Activated naive CD4-positive, alpha-beta T cell treated with anti-CD3 and anti-CD28 coated beads for 36 hours (primary cell): ENCODE measurements at regions of chr1 and their contacts with region 1.

Region 1: DNA sequence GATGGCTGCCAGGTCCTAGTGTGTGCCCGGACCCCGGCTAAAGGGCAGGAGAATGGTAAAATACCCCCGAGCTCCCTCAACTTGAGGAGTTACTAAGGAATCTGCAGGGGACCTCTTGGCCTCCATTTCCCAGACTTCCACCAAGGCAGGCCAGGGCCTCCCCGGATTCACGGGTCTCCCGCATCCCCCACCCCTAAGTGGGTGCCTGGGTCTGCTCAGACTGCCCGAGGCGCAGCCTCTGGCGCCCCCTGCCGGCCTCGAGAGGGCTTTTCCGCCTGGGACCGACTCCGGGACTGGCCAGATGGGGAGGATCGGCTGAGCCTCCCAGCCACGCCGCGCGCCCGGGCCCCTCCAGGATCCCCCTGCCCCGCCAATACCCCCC is 1.7 kb downstream of the PLEKHG5 start:
- DNase-seq: peak; percentile 87
- H3K4me3 Mint-ChIP-seq: peak overlapping the region; percentile 72
- H3K27ac Mint-ChIP-seq: peak overlapping the region; percentile 36
- H3K4me1 Mint-ChIP-seq: peaks cover 24% of the 10 kb centered on the region
- H3K27me3 Mint-ChIP-seq: peaks cover 10% of the 10 kb centered on the region

Region 2: DNA sequence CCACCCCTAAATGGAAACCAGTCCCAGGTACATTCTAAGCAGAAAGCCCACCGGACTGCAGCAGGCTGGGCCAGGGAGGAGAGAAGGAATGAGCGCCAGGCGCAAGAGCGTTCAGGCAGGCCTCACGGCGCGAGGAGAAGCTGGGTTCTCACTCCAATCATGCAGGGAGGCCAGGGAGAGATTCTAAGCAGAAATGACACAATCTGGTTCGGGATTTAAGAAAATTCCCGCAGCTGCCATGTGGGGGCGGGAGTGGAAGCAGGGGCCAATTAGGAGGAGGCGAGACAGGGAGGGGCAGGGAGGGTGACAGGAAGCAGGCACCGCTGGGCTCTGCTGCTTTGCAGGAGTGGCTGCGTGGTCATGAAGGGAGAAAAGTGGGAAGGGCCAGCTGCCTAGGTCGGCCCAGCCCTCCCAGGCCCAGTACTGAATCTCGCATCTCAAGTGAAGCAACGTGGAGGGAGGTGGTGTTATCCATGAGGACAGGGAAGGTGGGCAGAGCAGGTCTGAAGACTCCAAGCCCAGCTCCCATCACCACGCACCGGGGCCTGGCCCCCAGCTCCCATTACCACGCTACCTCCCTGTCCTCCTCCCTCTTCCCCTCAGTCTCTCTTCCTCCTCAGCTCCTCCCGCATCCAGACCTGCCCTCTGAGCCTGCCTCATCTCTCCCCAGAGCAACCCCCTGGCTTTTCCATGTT is 509.3 kb before region 1 on chr1:
- CTCF ChIA-PET with region 1: no interaction called
- intact Hi-C with region 1: no loop called
- DNase-seq: no peak
- H3K4me3 Mint-ChIP-seq: no peak overlapping the region
- H3K27ac Mint-ChIP-seq: no peak overlapping the region
- H3K4me1 Mint-ChIP-seq: peaks cover 4% of the 10 kb centered on the region
- H3K27me3 Mint-ChIP-seq: no peaks in the 10 kb centered on the region

Region 3: GRCh38 chr1:6343506-6344405 is 146.0 kb before region 1 on chr1:
- CTCF ChIA-PET with region 1: no interaction called
- intact Hi-C with region 1: loop called (anchors 2 kb)
- DNase-seq: peak; percentile 76
- H3K4me3 Mint-ChIP-seq: no peak overlapping the region
- H3K27ac Mint-ChIP-seq: no peak overlapping the region
- H3K4me1 Mint-ChIP-seq: peaks cover 10% of the 10 kb centered on the region
- H3K27me3 Mint-ChIP-seq: no peaks in the 10 kb centered on the region

Region 4: GRCh38 chr1:6445062-6445763 is 44.6 kb before region 1 on chr1:
- CTCF ChIA-PET with region 1: interaction called, 6 read pairs
- intact Hi-C with region 1: loop called (anchors 5 kb)
- DNase-seq: peak; percentile 62
- H3K4me3 Mint-ChIP-seq: no peak overlapping the region
- H3K27ac Mint-ChIP-seq: no peak overlapping the region
- H3K4me1 Mint-ChIP-seq: peaks cover 15% of the 10 kb centered on the region
- H3K27me3 Mint-ChIP-seq: peaks cover 45% of the 10 kb centered on the region

Region 5: GRCh38 chr1:6475381-6476133 is 14.2 kb before region 1 on chr1:
- CTCF ChIA-PET with region 1: interaction called, 19 read pairs
- intact Hi-C with region 1: no loop called
- DNase-seq: peak; percentile 81
- H3K4me3 Mint-ChIP-seq: no peak overlapping the region
- H3K27ac Mint-ChIP-seq: no peak overlapping the region
- H3K4me1 Mint-ChIP-seq: peaks cover 3% of the 10 kb centered on the region
- H3K27me3 Mint-ChIP-seq: no peaks in the 10 kb centered on the region

Region 6: GRCh38 chr1:6554031-6554906 is 64.5 kb after region 1 on chr1 and contains the start of gene NOL9:
- CTCF ChIA-PET with region 1: interaction called, 14 read pairs
- intact Hi-C with region 1: loop called (anchors 1 kb)
- DNase-seq: peak; percentile 96
- H3K4me3 Mint-ChIP-seq: peak within 1 kb of the TSS; percentile 80
- H3K27ac Mint-ChIP-seq: peak within 1 kb of the TSS; percentile 24
- H3K4me1 Mint-ChIP-seq: peaks cover 19% of the 10 kb centered on the region
- H3K27me3 Mint-ChIP-seq: no peaks in the 10 kb centered on the region
- total RNA-seq, gene NOL9: 24.6 to 29.6 TPM

Region 7: DNA sequence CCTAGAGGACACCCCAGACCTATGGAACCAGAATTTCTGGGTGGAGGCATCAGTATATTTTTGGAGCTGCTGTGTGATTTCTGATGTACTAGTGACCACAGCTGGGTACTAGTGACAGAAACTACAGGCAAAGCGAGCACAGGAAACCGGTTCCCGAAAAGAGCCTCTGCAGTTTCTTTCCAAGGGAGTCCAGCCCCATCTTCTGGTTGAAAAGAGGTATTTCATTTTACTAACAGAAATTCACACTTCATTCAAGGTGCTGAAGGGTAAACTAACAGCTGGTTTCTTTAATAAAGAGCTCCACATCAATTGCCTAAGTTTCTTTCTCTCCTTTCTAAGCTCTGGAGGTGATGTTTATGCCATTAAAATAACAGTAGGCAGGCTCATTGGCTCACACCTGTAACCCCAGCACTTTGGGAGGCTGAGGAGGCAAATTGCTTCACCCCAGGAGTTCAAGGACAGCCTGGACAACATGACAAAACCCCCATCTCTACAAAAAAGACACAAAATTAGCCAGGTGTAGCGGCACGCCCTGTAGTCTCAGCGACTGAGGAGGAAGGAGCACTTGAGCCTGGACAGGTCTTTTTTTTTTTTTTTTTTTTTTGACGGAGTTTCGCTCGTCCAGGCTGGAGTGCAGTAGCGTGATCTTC is 156.8 kb after region 1 on chr1:
- CTCF ChIA-PET with region 1: interaction called, 7 read pairs
- intact Hi-C with region 1: loop called (anchors 1 kb)
- DNase-seq: peak; percentile 42
- H3K4me3 Mint-ChIP-seq: no peak overlapping the region
- H3K27ac Mint-ChIP-seq: no peak overlapping the region
- H3K4me1 Mint-ChIP-seq: no peaks in the 10 kb centered on the region
- H3K27me3 Mint-ChIP-seq: no peaks in the 10 kb centered on the region